Mammary epithelial cell (primary cell): ENCODE measurements at regions of chr6 and their contacts with region 1.

Region 1: DNA sequence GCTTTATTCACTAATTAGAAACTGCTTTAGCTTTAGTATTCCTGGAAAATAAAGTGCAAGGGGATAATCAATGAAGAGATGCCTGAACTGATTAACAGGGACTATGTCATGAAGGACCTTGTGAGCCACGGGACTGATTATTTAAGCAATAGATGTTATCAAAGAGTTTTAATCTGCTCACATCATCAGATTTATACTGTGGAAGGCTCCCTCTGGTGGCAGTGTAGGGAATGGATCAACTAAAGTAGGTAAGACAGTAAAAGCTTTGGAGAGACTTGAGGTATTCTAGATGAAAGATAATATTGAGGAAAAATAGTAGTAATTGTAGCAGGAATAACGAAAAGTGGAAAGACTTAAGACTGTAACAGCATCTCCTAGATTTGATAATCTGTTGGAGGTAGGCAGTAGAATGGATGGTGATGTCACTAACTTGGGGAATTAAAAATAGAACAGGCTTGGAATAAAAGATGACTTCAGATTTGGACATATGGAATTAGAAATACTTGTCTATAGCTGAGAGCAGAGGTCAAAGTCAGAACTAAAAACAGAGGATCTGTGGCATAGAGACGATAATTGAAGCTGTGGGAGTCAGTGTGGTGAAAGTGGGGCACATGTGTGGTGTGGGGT is 80.3 kb upstream of the HTR1E start:
- DNase-seq: peak; percentile 33
- H3K4me3 ChIP-seq: no peak overlapping the region
- H3K27ac ChIP-seq: no peak overlapping the region
- H3K4me1 ChIP-seq: no peaks in the 10 kb centered on the region
- H3K27me3 ChIP-seq: no peaks in the 10 kb centered on the region
- CTCF ChIP-seq: peak; percentile 77 to 84

Region 2: DNA sequence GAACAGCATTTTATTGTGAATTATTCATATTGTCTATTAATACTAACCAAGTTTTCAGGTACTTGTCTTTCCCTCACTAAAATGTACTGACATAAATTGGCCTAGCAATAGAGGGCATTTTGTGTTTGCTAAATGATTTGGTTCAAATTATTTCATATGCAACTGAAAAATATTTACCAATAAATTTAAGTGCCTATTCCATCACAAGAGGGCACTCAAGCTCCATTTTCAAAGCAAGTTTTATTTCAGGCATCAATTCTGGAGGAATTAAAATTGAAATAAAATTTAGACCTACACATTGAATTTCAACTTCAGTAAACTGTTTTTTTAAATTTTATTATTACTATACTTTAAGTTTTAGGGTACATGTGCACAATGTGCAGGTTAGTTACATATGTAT is 1100.1 kb before region 1 on chr6:
- CTCF ChIA-PET with region 1: no interaction called
- dilution Hi-C with region 1: no loop called
- in situ Hi-C with region 1: no loop called
- intact Hi-C with region 1: loop called (anchors 2 kb)
- DNase-seq: no peak
- H3K4me3 ChIP-seq: no peak overlapping the region
- H3K27ac ChIP-seq: no peak overlapping the region
- H3K4me1 ChIP-seq: no peaks in the 10 kb centered on the region
- H3K27me3 ChIP-seq: no peaks in the 10 kb centered on the region
- CTCF ChIP-seq: peak; percentile 33 to 52

Region 3: GRCh38 chr6:85923013-85923430 is 934.0 kb before region 1 on chr6:
- CTCF ChIA-PET with region 1: interaction called, 5 read pairs
- dilution Hi-C with region 1: no loop called
- in situ Hi-C with region 1: loop called in 1 of 2 experiments (anchors 25 kb)
- intact Hi-C with region 1: no loop called
- DNase-seq: peak; percentile 60
- H3K4me3 ChIP-seq: no peak overlapping the region
- H3K27ac ChIP-seq: no peak overlapping the region
- H3K4me1 ChIP-seq: no peaks in the 10 kb centered on the region
- H3K27me3 ChIP-seq: no peaks in the 10 kb centered on the region
- CTCF ChIP-seq: peak; percentile 58 to 82

Region 4: DNA sequence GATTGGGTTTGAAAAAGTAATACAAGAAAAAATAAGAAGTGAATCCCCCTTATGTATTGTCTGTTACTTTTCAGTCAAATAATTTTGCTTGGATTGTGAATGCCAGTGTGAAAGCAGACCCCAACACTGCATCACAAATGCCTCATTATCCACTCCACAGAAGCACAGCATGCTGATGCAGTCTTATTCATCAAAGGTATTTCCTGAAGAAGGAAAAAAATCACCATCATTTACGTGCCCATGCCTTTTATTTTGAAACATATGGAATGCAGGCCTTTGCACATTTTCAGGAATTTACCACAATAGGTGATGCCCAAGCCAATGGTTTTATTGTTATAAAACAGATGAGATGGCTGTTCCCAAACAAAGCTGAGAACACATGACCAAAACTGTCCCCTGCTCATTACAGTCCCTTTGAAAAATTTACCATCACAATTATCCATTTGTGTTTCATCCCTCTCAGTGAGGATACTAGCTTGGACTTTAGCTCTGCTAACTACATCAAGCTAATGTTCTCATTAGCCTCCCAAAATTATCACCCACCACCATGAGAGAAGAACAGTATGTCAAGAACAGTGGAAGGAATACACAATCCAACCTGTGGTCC is 100.3 kb before region 1 on chr6:
- CTCF ChIA-PET with region 1: no interaction called
- dilution Hi-C with region 1: no loop called
- in situ Hi-C with region 1: no loop called
- intact Hi-C with region 1: no loop called
- DNase-seq: no peak
- H3K4me3 ChIP-seq: no peak overlapping the region
- H3K27ac ChIP-seq: no peak overlapping the region
- H3K4me1 ChIP-seq: no peaks in the 10 kb centered on the region
- H3K27me3 ChIP-seq: no peaks in the 10 kb centered on the region
- CTCF ChIP-seq: no peak

Region 5: GRCh38 chr6:86937219-86938079 is 80.4 kb after region 1 on chr6 and contains the start of gene HTR1E:
- CTCF ChIA-PET with region 1: no interaction called
- dilution Hi-C with region 1: no loop called
- in situ Hi-C with region 1: no loop called
- intact Hi-C with region 1: loop called (anchors 10 kb)
- DNase-seq: peak; percentile 23
- H3K4me3 ChIP-seq: peak within 1 kb of the TSS; percentile 4 to 23 (median 8)
- H3K27ac ChIP-seq: no peak within 1 kb of the TSS
- H3K4me1 ChIP-seq: peaks cover 6% of the 10 kb centered on the region
- H3K27me3 ChIP-seq: peaks cover 23% of the 10 kb centered on the region
- CTCF ChIP-seq: peak; percentile 38 to 63
- total RNA-seq, gene HTR1E: not detected

Region 6: DNA sequence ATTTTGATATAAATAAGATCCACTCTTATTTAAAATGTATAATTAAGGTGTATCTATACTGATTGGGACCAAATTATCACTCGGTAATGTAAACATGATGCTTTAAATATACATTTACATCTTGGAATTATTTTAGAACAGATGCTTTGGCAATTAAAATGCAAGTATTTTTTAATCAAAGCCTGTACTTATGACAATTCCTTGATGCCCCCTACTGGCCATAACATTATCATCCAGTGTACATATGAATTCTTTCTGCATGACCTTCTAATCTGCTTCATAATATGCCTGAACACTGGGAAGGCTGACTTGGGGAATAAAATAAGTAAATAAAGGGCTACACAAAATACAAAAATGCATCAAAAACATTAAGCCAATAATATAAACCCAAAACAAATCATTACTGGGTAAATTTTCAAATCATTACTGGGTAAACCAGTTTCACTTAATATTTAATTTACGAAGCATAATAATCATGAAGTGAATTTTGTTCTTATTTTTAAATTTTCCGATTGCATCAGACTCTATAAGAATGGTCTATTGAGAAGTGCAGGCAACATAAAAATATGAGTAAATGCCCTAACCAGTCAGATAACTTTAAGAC is 172.8 kb after region 1 on chr6:
- CTCF ChIA-PET with region 1: no interaction called
- dilution Hi-C with region 1: no loop called
- in situ Hi-C with region 1: no loop called
- intact Hi-C with region 1: loop called (anchors 5 kb)
- DNase-seq: peak; percentile 27
- H3K4me3 ChIP-seq: no peak overlapping the region
- H3K27ac ChIP-seq: no peak overlapping the region
- H3K4me1 ChIP-seq: no peaks in the 10 kb centered on the region
- H3K27me3 ChIP-seq: no peaks in the 10 kb centered on the region
- CTCF ChIP-seq: peak; percentile 64 to 71